Right ventricle myocardium superior (tissue), 1 donor: ENCODE measurements at regions of chr4 and their contacts with region 1.

Region 1: GRCh38 chr4:74133786-74134499 is 24.0 kb upstream of the MTHFD2L start:
- DNase-seq: peak; percentile 73
- ATAC-seq: peak; percentile 86

Region 2: GRCh38 chr4:73662709-73663546 is 471.0 kb before region 1 on chr4:
- intact Hi-C with region 1: loop called (anchors 5 kb)
- DNase-seq: no peak
- ATAC-seq: peak; percentile 60

Region 3: DNA sequence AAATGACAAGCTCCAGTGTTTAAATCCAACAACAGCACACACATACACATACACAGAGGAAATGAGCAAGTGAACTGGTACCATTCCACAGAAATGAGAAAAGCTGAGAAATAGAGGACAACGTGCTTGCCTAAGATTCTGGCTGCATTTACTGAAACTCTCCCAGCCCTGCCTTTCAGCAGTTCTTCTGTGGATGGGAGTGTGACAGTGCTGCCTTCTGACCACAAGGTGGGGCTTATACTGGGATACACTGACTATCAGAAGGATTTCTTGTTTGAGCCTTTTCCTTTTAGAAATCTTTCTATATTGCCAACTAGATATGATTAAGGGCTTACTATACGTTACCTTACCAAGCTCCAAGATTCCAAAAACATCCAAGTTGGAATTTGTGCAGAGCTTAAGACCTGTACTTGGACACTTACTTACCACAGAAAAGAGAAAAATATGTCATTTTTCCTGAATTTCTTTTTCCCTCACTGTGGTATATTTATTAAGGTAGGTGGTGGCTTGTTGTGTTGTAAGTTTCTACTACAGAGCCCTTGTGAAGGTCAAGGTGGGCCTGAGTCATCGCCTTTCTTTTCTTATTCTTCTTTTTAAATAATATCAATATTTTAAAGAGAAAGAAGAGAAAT is 404.3 kb before region 1 on chr4:
- intact Hi-C with region 1: loop called (anchors 5 kb)
- DNase-seq: peak; percentile 65
- ATAC-seq: peak; percentile 92